Heart left ventricle (tissue), 16 donors: ENCODE measurements at regions of chr11 and their contacts with region 1.

Region 1: GRCh38 chr11:57800444-57801182 is 39.0 kb downstream of the CTNND1 start:
- DNase-seq: no peak
- ATAC-seq: peak; percentile 40 to 74 (median 64)
- H3K4me3 ChIP-seq: no peak overlapping the region
- H3K27ac ChIP-seq: peak overlapping the region in 11 of 12 donors; percentile 45 to 81 (median 69)
- H3K4me1 ChIP-seq: peaks cover 11 to 70% (median 44%) of the 10 kb centered on the region in 12 donors
- H3K27me3 ChIP-seq: no peaks in the 10 kb centered on the region
- CTCF ChIP-seq: peak; percentile 81 to 94 (median 88)
- POLR2A ChIP-seq: no peak

Region 2: GRCh38 chr11:57667736-57668435 is 132.7 kb before region 1 on chr11 and contains the start of gene ZDHHC5:
- intact Hi-C with region 1: loop called in 1 of 10 experiments (anchors 10 kb)
- DNase-seq: peak; percentile 99 to 100 (median 100)
- ATAC-seq: peak; percentile 94 to 97 (median 96)
- H3K4me3 ChIP-seq: peak within 1 kb of the TSS; percentile 76 to 99 (median 88)
- H3K27ac ChIP-seq: peak within 1 kb of the TSS; percentile 96 to 100 (median 98)
- H3K4me1 ChIP-seq: peaks cover 7 to 42% (median 20%) of the 10 kb centered on the region in 12 donors
- H3K27me3 ChIP-seq: no peaks in the 10 kb centered on the region
- CTCF ChIP-seq: peak; percentile 27 to 80 (median 56)
- POLR2A ChIP-seq: peak; percentile 3 to 84
- total RNA-seq, gene ZDHHC5: 32.5 to 63.6 (median 45.7) TPM

Region 3: DNA sequence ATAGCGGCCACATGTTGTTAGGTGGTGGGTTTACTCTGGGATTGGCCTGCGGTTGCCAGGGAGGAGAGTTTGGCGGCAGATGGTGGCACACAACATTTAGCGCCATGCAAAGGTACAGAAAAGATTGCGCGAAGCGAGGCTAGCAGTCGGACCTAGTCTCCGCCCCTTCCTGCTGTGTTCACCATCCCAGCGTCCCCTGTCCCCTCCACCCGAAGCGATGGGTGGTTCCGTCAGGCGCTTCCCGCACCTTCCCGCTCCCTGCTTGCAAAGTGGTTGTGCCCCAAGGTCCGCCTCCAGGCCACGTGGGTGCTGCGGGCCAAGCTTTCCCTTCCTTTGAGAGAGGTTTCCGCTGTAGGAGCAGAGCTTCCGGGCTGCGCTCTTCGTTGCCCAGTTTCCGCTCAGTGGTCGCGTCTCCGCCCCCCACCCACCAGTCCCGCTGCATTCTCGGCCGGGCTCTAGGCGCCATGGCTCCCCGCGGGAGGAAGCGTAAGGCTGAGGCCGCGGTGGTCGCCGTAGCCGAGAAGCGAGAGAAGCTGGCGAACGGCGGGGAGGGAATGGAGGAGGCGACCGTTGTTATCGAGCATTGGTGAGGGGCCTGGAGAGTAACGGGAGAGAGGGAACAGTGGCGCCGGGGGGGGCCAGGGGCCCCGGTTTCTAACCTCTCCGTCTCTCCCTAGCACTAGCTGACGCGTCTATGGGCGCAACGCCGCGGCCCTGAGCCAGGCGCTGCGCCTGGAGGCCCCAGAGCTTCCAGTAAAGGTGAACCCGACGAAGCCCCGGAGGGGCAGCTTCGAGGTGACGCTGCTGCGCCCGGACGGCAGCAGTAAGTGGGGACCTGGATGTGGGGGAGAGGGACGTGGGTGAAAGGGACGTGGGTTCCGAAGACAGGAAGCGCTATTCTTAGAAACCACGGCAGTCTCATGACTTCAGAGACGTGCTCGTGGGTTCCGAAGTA is 59.2 kb before region 1 on chr11 and contains the start of gene SELENOH:
- intact Hi-C with region 1: loop called in 1 of 10 experiments (anchors 5 kb)
- DNase-seq: peak; percentile 95 to 98 (median 97)
- ATAC-seq: peak; percentile 96 to 98 (median 98)
- H3K4me3 ChIP-seq: peak within 1 kb of the TSS; percentile 78 to 99 (median 92)
- H3K27ac ChIP-seq: peak within 1 kb of the TSS; percentile 92 to 99 (median 96)
- H3K4me1 ChIP-seq: peaks cover 2 to 42% (median 14%) of the 10 kb centered on the region in 12 donors
- H3K27me3 ChIP-seq: no peaks in the 10 kb centered on the region
- CTCF ChIP-seq: peak in 1 of 12 donors; percentile 4
- POLR2A ChIP-seq: peak in 1 of 2 donors; percentile 73
- total RNA-seq, gene SELENOH: 56.8 to 134 (median 85.7) TPM

Region 4: GRCh38 chr11:57761301-57762234 is 39.0 kb before region 1 on chr11 and contains the start of gene CTNND1:
- intact Hi-C with region 1: loop called (anchors 1 to 5 kb)
- DNase-seq: peak; percentile 82 to 93 (median 91)
- ATAC-seq: peak; percentile 99
- H3K4me3 ChIP-seq: peak within 1 kb of the TSS; percentile 49 to 76 (median 66)
- H3K27ac ChIP-seq: peak within 1 kb of the TSS; percentile 84 to 97 (median 92)
- H3K4me1 ChIP-seq: peaks cover 0 to 39% (median 25%) of the 10 kb centered on the region in 12 donors
- H3K27me3 ChIP-seq: no peaks in the 10 kb centered on the region
- CTCF ChIP-seq: peak in 1 of 12 donors; percentile 18
- POLR2A ChIP-seq: peak in 1 of 2 donors; percentile 86
- total RNA-seq, gene CTNND1: 51.4 to 105 (median 60.8) TPM

Region 5: GRCh38 chr11:57823859-57824258 is 23.2 kb after region 1 on chr11:
- intact Hi-C with region 1: no loop called
- DNase-seq: no peak
- ATAC-seq: no peak
- H3K4me3 ChIP-seq: no peak overlapping the region
- H3K27ac ChIP-seq: no peak overlapping the region
- H3K4me1 ChIP-seq: peaks cover 0 to 10% (median 0%) of the 10 kb centered on the region in 12 donors
- H3K27me3 ChIP-seq: no peaks in the 10 kb centered on the region
- CTCF ChIP-seq: no peak
- POLR2A ChIP-seq: no peak

Region 6: DNA sequence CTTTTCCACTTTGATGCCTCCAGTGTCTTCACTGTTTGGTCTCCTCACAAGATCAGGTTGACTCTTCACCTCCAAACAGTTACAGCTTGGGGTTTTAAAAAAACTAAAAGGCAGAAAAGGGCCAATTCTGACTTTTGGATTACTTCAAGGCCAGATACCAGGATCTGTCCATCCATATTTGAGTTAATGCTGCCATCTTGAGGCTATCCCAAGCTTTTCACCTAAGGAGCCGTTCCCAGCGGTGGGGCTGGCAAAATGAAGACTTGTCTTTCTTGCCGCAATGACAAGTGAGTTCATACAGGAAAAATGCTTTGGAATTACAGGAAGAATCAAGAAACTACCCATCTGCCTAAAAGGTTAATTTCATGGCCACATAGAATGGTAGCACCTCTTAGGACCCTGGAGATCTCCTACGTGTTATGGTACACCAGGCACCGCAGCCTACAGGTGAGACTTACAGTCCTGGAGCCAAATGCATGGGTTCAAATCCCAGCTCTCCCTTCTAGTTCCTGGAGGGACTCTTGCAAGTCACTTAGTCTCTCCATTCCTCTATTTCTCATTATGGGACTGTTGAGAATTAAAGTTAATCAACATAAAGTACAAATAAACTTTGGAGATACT is 713.2 kb after region 1 on chr11:
- intact Hi-C with region 1: loop called in 2 of 10 experiments (anchors 10 kb)
- DNase-seq: no peak
- ATAC-seq: peak in 3 of 4 donors; percentile 65 to 74 (median 73)
- H3K4me3 ChIP-seq: no peak overlapping the region
- H3K27ac ChIP-seq: no peak overlapping the region
- H3K4me1 ChIP-seq: peaks cover 0 to 3% (median 0%) of the 10 kb centered on the region in 12 donors
- H3K27me3 ChIP-seq: peaks cover 0 to 5% (median 0%) of the 10 kb centered on the region in 9 donors
- CTCF ChIP-seq: peak; percentile 42 to 76 (median 68)
- POLR2A ChIP-seq: no peak